OCI-LY7 (cell line): ENCODE measurements at regions of chr19 and their contacts with region 1.

Region 1: DNA sequence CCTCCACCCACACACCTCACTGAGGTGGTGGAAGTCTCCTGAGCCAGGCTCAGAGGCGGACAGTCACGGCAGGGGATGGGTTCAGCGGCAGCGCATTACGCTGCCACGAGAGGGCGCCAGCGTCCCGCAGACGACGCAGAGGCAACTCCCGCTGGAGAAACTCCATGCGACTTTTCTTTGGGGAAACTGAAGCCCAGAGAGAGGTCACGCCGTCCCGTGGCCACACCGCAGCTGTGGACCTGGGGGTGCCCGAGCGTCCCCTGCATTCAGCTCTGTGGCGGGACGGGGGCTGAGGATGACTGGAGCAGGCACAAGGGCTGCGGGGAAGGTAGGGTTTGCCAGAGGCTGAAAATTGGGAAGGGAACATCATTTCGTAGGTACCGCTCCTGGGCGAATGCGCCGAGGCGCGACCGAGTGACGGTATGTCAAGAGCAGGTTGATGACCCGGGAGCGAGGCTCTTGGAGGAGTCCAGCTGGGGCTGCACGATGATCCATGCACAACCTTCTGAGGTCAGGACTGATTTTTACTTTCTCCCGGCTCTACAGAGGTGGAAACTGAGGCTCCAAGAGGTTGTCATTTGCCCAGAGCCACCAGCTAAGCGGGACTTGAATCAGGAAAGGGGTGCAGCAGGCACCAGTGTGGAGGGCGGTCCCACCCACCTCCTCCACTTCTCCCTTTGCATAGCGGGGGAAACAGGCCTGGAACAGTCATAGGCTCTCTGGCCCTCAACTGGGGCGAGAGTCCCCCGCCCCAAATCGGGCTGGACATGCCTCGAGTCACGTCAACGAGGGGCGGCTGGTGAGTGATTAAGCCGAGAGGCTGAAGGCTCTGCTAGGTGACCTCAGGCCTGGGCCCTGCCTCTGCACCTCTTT is 690 bp upstream of the ARRDC2 start:
- DNase-seq: peak; percentile 82
- H3K4me3 ChIP-seq: peak overlapping the region; percentile 59
- H3K27ac ChIP-seq: peak overlapping the region; percentile 59
- H3K4me1 ChIP-seq: peaks cover 21% of the 10 kb centered on the region
- CTCF ChIP-seq: peak; percentile 98

Region 2: DNA sequence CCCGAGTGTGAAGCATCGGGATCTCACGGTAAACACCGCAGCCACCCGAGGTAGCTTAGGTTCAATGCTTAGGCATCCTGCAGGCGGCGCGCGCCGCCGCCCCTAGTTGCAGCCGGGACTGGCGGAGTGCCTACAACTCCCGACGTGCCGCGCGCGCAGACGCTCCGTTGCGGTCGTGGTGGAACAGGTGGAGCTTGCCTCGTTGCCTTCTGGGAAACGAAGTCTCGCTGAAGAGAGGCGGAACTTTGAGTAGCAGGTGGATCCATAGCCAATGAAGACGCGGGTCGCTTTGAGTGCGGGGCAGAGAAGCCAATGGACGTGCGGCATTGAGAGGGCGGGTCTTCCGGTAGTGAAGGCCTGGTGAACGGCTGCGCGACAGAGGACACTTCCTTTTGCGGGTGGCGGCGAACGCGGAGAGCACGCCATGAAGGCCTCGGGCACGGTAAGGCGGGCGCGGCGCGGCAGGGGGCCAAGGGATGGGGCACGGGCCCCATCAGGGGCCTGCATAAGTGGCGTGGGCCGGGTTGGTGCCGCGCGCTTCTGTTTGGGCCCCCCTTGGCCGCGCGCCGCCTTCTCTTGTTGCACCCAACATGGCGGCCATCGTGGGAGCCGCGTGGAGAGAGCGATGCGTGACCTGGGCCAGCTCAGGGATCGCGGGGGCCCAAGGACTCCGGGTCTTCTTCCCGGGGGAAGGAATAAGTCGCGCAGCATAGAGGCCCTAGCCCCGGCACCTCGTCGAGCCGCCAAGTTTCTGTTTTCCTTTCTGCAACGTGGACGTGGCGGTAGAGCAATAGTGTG is 147.5 kb before region 1 on chr19 and contains the start of gene RPL18A:
- CTCF ChIA-PET with region 1: no interaction called
- POLR2A ChIA-PET with region 1: no interaction called
- intact Hi-C with region 1: no loop called
- DNase-seq: peak; percentile 100
- H3K4me3 ChIP-seq: peak within 1 kb of the TSS; percentile 90
- H3K27ac ChIP-seq: peak within 1 kb of the TSS; percentile 65
- H3K4me1 ChIP-seq: peaks cover 36% of the 10 kb centered on the region
- CTCF ChIP-seq: peak; percentile 93
- total RNA-seq, gene RPL18A: 2,643 and 3,019 TPM in 2 replicates

Region 3: DNA sequence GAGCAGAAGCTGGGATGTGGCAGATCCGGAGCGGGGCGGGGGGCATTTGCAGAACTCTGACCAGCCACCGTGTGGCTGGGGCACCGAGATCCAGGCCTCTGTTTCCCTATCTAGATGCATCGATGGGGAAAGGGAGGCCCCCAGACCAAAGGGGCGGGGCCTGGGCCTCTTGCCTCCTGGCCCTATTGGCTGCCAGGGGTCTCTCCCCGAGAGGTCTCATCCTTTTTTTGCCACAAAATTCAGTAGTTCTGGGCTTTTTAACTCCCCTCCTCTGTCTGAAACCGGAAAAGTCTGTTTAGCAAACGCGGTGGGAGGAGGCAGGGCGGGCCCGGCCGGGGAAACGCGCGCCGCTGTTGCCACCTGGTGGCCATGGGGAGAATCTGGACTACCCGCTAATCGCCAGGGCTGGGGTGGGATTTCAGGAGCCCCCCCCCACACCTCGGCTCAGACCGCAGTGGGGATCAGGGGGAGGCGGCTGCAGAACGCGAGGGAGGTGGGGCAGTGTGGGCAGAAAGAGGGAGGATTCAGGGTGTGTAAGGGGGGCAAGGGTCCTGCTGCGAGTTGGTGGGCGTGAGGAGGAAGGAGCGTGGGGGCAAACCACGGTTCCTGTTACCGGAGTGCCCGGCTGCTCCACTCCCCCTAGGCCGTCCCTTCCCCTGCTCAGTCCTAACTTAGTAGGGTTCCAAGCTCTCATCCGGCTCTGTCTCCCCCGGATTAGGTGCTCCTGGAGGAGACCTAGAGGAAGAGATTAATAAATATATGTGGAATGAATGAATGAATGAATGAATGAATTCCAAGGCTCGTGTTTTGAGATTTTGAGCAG is 51.1 kb after region 1 on chr19:
- CTCF ChIA-PET with region 1: interaction called, 3 read pairs
- POLR2A ChIA-PET with region 1: interaction called, 3 read pairs
- intact Hi-C with region 1: loop called (anchors 1 kb)
- DNase-seq: peak; percentile 85
- H3K4me3 ChIP-seq: peak overlapping the region; percentile 9
- H3K27ac ChIP-seq: peak overlapping the region; percentile 54
- H3K4me1 ChIP-seq: peaks cover 23% of the 10 kb centered on the region
- CTCF ChIP-seq: peak; percentile 98

Region 4: DNA sequence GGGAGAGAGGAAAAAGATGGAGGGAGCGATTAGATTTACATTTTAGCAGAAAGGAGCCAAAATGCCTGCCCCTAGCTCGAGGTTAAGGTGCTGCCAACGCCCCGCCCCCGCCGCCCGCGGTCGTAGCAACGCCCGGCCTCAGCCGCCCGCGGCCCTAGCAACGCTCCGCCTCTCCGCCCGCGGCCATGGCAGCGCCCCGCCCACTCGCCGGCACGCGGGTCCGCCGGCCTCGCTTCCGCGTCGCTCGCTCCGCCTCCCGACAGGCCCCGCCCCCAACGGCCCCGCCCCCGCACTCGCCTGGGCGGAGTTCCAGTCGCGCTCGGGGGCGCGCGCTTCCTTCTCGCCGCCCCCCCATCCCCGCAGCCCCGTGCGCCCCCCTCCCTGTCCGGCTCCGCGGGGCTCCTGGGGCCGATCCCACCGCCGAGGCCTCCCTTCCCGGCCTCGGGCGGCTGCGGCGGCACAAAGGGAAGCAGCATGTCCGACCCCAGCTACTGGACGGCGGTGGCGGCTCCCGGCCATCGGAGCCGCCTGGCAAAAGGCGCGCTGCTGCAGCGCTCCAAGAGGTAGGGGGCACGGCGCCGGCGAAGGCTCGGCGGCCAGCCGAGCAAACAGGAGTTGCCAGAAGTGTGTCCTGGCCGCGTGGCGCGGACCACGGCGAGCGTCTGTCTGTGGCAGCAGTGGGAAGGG is 110.6 kb after region 1 on chr19:
- CTCF ChIA-PET with region 1: no interaction called
- POLR2A ChIA-PET with region 1: no interaction called
- intact Hi-C with region 1: no loop called
- DNase-seq: peak; percentile 93
- H3K4me3 ChIP-seq: peak overlapping the region; percentile 73
- H3K27ac ChIP-seq: peak overlapping the region; percentile 70
- H3K4me1 ChIP-seq: peaks cover 35% of the 10 kb centered on the region
- CTCF ChIP-seq: no peak

Region 5: DNA sequence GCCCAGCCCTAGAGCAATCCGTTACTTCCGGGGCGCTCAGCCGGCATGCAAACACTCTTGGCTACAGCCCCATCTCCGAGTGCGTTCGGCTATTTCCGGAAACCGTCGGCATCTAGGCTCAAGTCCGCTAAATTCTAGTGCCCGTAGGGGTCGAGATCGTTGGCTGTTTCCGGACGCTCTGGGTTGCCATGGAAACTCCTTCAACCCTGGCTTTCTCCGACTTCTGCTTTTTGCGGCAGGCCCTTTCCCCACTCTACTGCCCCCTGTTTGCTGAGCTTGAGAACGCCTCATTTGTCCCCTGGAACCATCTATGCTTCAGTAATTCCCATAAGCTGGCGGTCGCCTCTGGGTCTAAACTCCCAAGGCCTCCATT is 145.2 kb after region 1 on chr19:
- CTCF ChIA-PET with region 1: no interaction called
- POLR2A ChIA-PET with region 1: no interaction called
- intact Hi-C with region 1: loop called (anchors 5 kb)
- DNase-seq: peak; percentile 100
- H3K4me3 ChIP-seq: peak overlapping the region; percentile 82
- H3K27ac ChIP-seq: peak overlapping the region; percentile 90
- H3K4me1 ChIP-seq: peaks cover 27% of the 10 kb centered on the region
- CTCF ChIP-seq: peak; percentile 88